ENCODE measurements at regions of chr17 and their contacts with region 1.

Region 1: DNA sequence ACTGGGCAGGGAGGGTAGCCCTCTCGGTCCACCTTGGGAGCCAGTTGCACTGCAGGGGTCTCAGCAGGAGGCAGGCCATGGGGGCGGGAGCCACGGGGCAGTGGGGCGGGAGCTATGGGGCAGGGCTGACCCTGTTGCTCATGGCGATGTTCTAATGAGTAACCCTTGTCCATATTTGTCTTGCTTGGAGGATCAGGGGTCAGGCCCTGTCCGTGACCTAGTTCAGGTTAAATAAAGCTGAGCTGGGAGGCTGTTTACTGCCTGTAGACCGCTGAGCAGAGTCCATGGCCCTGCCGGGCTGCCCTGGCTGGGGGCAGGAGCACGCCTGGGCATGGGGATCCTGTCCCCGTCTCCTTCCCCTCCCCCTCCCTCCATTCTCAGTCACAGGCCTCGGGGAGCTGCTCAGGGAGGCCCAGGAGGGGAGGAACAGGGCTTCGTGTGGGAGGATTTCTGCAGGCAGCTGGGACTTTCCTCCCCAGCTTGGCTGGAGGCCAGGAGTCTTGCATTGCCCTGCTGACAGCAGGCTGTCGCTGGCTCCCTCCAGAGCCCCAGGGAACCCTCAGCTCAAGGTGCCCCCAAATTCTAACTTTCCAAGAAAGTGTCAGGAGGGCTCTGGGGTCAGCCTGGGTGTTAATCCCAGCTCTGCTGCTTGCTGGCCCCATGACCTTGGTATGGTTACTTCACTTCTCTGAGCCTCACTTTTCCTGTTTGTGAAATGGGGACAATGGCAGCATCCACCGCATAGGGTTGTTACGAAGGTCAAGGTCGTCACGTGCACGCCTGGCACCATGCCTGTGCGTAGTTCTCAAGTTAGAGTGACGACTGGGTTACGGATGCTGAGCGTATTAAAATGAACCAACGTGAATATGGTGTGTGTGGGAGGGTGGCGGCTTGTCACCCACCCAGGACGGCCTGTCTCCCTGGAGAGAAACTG is 6.1 kb upstream of the SERPINF2 start:
- DNase-seq: peak in 41 of 42 donors; percentile 41 to 89 (median 68)

Region 2: DNA sequence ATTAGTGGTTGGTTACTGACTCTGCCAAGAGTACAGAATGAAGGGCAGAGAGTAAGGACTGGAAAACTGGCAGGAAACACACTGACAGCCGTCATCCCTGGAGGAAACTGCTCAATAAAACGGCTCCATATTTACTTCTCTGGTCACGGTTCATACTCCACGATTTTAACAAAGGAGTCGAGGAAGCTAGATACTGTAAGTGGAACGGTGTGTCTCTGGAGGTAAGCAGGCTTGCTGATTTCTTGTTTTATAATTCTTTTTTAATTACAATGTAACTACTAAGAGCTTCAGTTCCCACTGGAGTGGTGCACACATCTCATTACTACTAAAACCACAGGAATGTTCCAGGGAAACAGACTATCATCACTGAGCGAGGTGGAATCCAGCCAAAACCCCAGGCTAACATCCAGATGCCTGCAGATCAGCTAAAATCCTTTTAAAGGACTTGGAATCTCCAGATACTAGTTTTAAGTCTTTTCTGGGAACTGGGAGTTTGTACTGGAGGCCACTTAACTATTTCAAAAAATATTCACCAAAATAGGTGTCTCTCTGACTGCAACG is 43.0 kb after region 1 on chr17:
- intact Hi-C with region 1: loop called (anchors 5 kb)
- DNase-seq: no peak